Activated CD4-positive, alpha-beta memory T cell treated with anti-CD3 and anti-CD28 coated beads, Interleukin-2, amount 10 ng/mL, durations not matched to agents 7 days and 5 days (primary cell): ENCODE measurements at regions of chrX and their contacts with region 1.

Region 1: GRCh38 chrX:154308108-154308946 is 12.7 kb downstream of the TKTL1 start:
- DNase-seq: peak; percentile 83
- H3K4me3 Mint-ChIP-seq: no peak overlapping the region
- H3K27ac Mint-ChIP-seq: peak overlapping the region; percentile 74
- H3K4me1 Mint-ChIP-seq: peaks cover 49% of the 10 kb centered on the region
- H3K27me3 Mint-ChIP-seq: no peaks in the 10 kb centered on the region

Region 2: DNA sequence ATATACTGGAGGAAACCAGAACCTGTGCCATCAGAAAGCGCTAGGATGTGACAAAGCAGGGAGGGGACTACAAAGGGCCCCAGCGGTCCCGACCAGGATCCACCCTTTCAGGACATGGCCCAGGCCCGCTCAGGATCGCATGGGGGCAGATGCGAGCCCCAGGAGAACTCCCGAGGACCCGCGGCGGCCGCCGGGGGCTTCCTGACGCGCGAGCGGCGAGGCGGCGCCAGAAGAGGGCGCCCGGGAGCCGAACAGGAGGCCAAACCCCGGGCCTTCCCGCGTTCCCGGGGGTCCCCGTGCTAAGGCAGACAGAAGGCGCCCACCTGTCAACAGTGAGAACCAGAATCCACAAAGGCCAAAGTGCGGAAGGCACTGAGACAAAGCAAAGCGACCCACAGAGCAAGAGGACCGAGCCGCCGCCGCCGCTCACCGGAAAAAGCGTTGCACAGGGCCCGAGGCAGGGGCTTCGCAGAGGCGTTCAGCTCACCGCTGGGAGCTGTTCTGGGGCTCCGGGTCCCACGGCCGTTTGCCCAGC is 171.6 kb before region 1 on chrX:
- CTCF ChIA-PET with region 1: interaction called, 16 read pairs
- POLR2A ChIA-PET with region 1: interaction called, 3 read pairs
- DNase-seq: peak; percentile 66
- H3K4me3 Mint-ChIP-seq: peak overlapping the region; percentile 64
- H3K27ac Mint-ChIP-seq: peak overlapping the region; percentile 92
- H3K4me1 Mint-ChIP-seq: peaks cover 39% of the 10 kb centered on the region
- H3K27me3 Mint-ChIP-seq: no peaks in the 10 kb centered on the region

Region 3: GRCh38 chrX:154327038-154327820 is 18.9 kb after region 1 on chrX:
- CTCF ChIA-PET with region 1: interaction called, 19 read pairs
- POLR2A ChIA-PET with region 1: interaction called, 4 read pairs
- DNase-seq: peak; percentile 64
- H3K4me3 Mint-ChIP-seq: peak overlapping the region; percentile 40
- H3K27ac Mint-ChIP-seq: peak overlapping the region; percentile 84
- H3K4me1 Mint-ChIP-seq: peaks cover 30% of the 10 kb centered on the region
- H3K27me3 Mint-ChIP-seq: no peaks in the 10 kb centered on the region

Region 4: GRCh38 chrX:154348114-154348531 is 39.8 kb after region 1 on chrX:
- CTCF ChIA-PET with region 1: no interaction called
- POLR2A ChIA-PET with region 1: no interaction called
- DNase-seq: no peak
- H3K4me3 Mint-ChIP-seq: peak overlapping the region; percentile 30
- H3K27ac Mint-ChIP-seq: peak overlapping the region; percentile 81
- H3K4me1 Mint-ChIP-seq: peaks cover 54% of the 10 kb centered on the region
- H3K27me3 Mint-ChIP-seq: no peaks in the 10 kb centered on the region

Region 5: DNA sequence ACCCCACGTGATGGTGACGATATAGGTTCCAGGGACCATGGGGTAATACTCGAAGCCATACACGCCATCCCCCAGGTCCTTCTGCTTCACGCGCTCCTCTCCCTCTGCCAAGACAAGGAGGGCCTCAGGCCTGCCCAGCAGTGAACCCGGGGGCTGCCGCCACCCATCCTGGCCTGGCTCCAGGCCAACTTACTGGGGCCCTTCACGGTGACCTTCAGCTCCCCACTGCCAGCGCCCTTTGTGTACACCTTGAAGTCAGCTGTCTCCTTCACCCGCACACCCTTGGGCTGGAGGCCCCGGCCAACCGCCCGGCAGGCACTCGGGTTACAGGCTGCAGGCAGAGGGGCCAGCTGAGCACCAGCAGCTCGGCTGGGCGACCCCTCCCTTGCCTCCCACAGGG is 56.8 kb after region 1 on chrX:
- CTCF ChIA-PET with region 1: no interaction called
- POLR2A ChIA-PET with region 1: no interaction called
- DNase-seq: no peak
- H3K4me3 Mint-ChIP-seq: no peak overlapping the region
- H3K27ac Mint-ChIP-seq: no peak overlapping the region
- H3K4me1 Mint-ChIP-seq: peaks cover 53% of the 10 kb centered on the region
- H3K27me3 Mint-ChIP-seq: no peaks in the 10 kb centered on the region